HCT116 (cell line): ENCODE measurements at regions of chr10 and their contacts with region 1.

Region 1: DNA sequence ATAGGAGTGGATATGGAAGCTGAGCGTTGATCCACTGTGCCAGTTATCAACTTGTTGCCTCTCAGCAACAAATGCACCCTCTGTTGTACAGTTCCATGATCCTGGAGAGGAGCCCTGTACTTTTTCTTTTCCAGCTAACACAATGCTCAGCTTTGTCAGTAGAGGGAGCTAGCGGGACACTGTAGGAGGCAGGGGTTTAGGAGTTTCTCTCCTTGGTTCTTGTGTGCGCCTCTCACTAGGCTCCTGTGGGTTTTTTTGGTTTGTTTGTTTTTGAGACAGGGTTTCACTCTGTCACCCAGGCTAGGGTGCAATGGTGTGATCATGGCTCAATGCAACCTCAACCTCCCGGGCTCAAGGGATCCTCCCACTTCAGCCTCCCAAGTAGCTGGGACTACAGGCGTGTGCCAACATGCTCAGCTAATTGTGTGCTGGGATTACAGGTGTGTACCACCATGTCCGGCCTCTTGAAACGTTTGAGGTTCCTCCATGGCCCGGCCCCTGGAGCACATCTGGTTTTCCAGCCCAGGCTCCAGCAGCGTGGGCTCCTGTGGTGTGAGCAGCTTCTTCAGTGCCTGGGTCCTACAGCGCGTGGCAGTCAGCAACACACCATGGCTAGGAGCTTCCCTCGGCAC is 12.0 kb upstream of the MARVELD1 start:
- DNase-seq: no peak
- ATAC-seq: peak; percentile 98
- H3K4me3 ChIP-seq: no peak overlapping the region
- H3K27ac ChIP-seq: no peak overlapping the region; the same call in 1 of the 2 replicates
- H3K4me1 ChIP-seq: peaks cover 0 to 12% of the 10 kb centered on the region in 2 experiments; a peak in 2 of 4 replicates
- H3K27me3 ChIP-seq: no peaks in the 10 kb centered on the region
- CTCF ChIP-seq: peak; percentile 93 to 95 (median 93)
- POLR2A ChIP-seq: no peak
- RAD21 ChIP-seq: peak; percentile 92

Region 2: GRCh38 chr10:97676770-97677581 is 24.6 kb before region 1 on chr10:
- CTCF ChIA-PET with region 1: interaction called, 11 read pairs
- POLR2A ChIA-PET with region 1: no interaction called
- RAD21 ChIA-PET with region 1: no interaction called
- intact Hi-C with region 1: loop called (anchors 2 kb)
- DNase-seq: no peak
- ATAC-seq: peak; percentile 86
- H3K4me3 ChIP-seq: no peak overlapping the region
- H3K27ac ChIP-seq: 0 out of 2 replicates have a peak overlapping the region, but pooled peaks have one; percentile 20
- H3K4me1 ChIP-seq: peaks cover 0 to 15% of the 10 kb centered on the region in 2 experiments; a peak in 3 of 4 replicates
- H3K27me3 ChIP-seq: no peaks in the 10 kb centered on the region
- CTCF ChIP-seq: peak; percentile 71 to 88 (median 85)
- POLR2A ChIP-seq: no peak
- RAD21 ChIP-seq: peak; percentile 87

Region 3: DNA sequence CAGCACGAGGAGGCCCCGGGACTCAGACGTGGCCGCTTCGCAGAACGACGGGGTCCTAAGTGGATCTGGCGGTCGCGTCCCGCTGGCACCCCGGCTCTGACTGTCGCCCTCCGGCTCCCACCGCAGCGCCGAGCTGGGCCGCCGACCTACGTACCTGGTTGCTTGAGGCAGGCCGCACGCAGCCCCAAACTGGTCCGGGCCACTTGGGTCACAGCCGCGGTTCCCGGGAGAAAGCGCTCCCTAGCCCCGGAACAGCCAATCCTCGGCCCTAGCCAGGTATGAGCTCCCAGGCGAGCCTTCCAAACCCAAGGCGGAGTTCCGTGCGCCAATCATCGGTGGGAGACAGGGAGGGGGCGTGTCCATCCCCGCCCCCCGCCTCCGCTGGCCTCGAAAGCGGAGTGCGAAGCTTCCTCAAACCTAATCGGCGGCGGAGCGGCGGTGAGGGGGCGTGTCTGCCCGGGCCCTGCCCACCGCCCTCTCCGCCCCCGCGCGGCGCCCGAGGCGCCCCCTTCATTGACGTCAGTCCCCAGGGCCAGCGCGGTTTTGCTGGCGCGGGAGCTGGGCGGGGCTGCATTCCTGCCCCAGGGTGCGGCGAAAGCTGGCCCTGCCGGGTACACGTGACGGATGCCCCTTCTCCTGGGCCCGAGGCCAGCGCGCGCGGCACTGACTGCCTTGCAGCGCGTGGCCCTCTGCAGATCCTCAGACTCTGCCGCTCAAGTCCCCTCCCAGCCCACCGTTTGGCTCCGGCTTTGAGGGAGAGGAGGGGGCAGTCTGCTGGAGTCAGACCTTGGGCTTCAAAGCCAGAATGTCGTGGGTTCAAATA is 14.4 kb before region 1 on chr10 and contains the start of gene AVPI1:
- CTCF ChIA-PET with region 1: interaction called, 27 read pairs
- POLR2A ChIA-PET with region 1: interaction called, 15 read pairs
- RAD21 ChIA-PET with region 1: interaction called in 1 of 2 experiments, 4 read pairs
- intact Hi-C with region 1: no loop called
- DNase-seq: peak; percentile 96
- ATAC-seq: peak; percentile 87
- H3K4me3 ChIP-seq: peak within 1 kb of the TSS; percentile 73 to 90
- H3K27ac ChIP-seq: peak within 1 kb of the TSS; percentile 74
- H3K4me1 ChIP-seq: peaks cover 47 to 67% of the 10 kb centered on the region in 2 experiments
- H3K27me3 ChIP-seq: no peaks in the 10 kb centered on the region
- CTCF ChIP-seq: no peak
- POLR2A ChIP-seq: peak; percentile 56
- RAD21 ChIP-seq: no peak
- total RNA-seq, gene AVPI1: 26.7 TPM

Region 4: GRCh38 chr10:97714048-97714371 is 12.5 kb after region 1 on chr10:
- CTCF ChIA-PET with region 1: interaction called, 18 read pairs
- POLR2A ChIA-PET with region 1: interaction called, 4 read pairs
- RAD21 ChIA-PET with region 1: interaction called in 1 of 2 experiments, 3 read pairs
- intact Hi-C with region 1: no loop called
- DNase-seq: no peak
- ATAC-seq: peak; percentile 52
- H3K4me3 ChIP-seq: peak overlapping the region; percentile 72 to 81
- H3K27ac ChIP-seq: peak overlapping the region; percentile 99
- H3K4me1 ChIP-seq: peaks cover 33 to 52% of the 10 kb centered on the region in 2 experiments
- H3K27me3 ChIP-seq: no peaks in the 10 kb centered on the region
- CTCF ChIP-seq: no peak
- POLR2A ChIP-seq: peak; percentile 22
- RAD21 ChIP-seq: no peak

Region 5: DNA sequence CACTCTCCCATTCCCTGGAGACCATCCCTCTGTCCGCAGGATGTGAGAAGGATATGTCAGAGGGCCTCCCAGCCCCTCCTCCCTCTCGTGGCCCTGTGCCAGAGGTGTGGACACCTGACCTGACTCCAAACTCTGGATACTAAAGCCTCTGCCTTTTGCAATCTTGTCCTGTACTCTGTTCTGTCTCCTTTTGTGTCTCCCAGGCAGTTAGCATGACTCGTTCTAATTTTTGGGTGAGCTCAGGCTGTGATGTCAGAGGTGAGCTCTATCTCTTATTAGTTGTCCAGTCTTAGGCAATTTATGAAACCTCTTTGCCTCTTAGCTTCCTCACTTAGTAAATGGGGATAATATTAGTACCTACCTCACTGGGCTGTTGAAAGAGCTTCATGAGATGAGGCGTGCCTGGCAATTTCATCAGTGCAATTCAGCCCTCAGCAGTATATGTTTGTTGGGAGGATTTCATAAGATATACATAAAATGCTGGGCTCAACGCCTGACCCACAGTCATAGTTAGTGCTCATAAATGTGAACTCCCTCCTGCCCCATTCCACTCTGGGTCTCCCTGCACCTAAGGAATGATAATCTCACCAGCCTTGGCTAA is 22.9 kb after region 1 on chr10:
- CTCF ChIA-PET with region 1: interaction called, 13 read pairs
- POLR2A ChIA-PET with region 1: no interaction called
- RAD21 ChIA-PET with region 1: no interaction called
- intact Hi-C with region 1: no loop called
- DNase-seq: no peak
- ATAC-seq: 0 out of 2 replicates have a peak, but pooled peaks have one; percentile 17
- H3K4me3 ChIP-seq: no peak overlapping the region
- H3K27ac ChIP-seq: no peak overlapping the region
- H3K4me1 ChIP-seq: peaks cover 7 to 16% of the 10 kb centered on the region in 2 experiments
- H3K27me3 ChIP-seq: no peaks in the 10 kb centered on the region
- CTCF ChIP-seq: no peak
- POLR2A ChIP-seq: no peak
- RAD21 ChIP-seq: no peak

Region 6: DNA sequence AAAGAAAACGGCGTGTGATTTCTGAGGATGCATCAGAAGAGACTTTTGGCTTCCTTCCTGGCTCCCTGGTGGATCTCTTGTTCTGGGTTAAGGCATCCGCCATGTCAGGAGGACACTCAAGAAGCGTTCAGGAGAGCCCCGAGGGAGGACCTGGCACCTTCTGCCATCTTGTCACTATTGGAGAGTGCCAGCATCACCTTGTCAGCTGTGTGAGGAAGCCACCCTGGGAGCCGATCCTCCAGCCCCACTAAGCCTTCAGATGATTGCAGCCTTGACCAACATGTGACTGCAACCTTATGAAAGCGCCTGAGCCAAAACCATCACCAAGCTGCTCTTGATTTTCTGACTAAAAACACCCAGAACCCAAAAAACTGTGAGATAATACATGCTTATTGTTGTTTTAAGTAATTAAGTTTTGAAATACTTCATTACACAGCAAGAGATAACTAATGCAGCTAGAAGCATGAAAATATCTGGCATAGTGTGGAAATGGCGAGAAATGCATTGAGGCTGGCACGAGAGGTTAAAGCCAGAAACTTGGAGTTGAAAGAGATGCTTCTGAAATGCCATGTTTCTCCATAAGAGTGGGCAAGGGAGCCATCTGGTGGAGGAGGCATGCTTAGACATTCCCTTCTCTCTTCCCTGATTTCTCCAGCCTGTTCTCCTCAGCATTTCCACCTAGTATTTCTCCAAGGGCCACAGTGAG is 29.9 kb after region 1 on chr10:
- CTCF ChIA-PET with region 1: interaction called, 8 read pairs
- POLR2A ChIA-PET with region 1: interaction called, 3 read pairs
- RAD21 ChIA-PET with region 1: interaction called, 3 to 4 read pairs
- intact Hi-C with region 1: loop called (anchors 2 kb)
- DNase-seq: no peak
- ATAC-seq: peak; percentile 87
- H3K4me3 ChIP-seq: no peak overlapping the region
- H3K27ac ChIP-seq: no peak overlapping the region
- H3K4me1 ChIP-seq: peaks cover 0 to 8% of the 10 kb centered on the region in 2 experiments; a peak in 2 of 4 replicates
- H3K27me3 ChIP-seq: no peaks in the 10 kb centered on the region
- CTCF ChIP-seq: peak; percentile 85 to 95 (median 86)
- POLR2A ChIP-seq: no peak
- RAD21 ChIP-seq: peak; percentile 98

Region 7: GRCh38 chr10:98361131-98362025 is 659.8 kb after region 1 on chr10:
- CTCF ChIA-PET with region 1: no interaction called
- POLR2A ChIA-PET with region 1: no interaction called
- RAD21 ChIA-PET with region 1: no interaction called
- intact Hi-C with region 1: no loop called
- DNase-seq: no peak
- ATAC-seq: peak; percentile 70
- H3K4me3 ChIP-seq: no peak overlapping the region
- H3K27ac ChIP-seq: no peak overlapping the region
- H3K4me1 ChIP-seq: peaks cover 0 to 3% of the 10 kb centered on the region in 2 experiments; a peak in 1 of 4 replicates
- H3K27me3 ChIP-seq: no peaks in the 10 kb centered on the region
- CTCF ChIP-seq: no peak
- POLR2A ChIP-seq: no peak
- RAD21 ChIP-seq: no peak

Region 8: DNA sequence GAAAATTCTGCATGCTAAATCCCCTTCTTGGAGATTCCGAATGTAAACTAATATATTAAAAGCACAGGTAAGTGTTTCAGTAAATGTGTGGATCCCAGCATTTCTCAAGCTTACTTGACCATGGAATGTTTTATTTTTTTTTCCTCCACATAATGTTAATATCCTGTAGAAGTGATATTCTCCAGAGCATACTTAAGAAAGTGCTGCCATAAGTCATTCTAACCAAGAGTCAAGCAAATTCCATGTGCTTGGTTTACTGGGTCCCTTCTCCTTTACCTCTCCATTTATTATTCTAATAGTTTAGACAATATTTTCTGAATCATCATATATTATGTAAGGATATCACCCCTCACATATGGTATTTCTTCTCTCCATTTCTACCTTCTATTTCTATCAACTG is 1012.0 kb after region 1 on chr10:
- CTCF ChIA-PET with region 1: no interaction called
- POLR2A ChIA-PET with region 1: no interaction called
- RAD21 ChIA-PET with region 1: no interaction called
- intact Hi-C with region 1: no loop called
- DNase-seq: no peak
- ATAC-seq: no peak
- H3K4me3 ChIP-seq: no peak overlapping the region
- H3K27ac ChIP-seq: no peak overlapping the region
- H3K4me1 ChIP-seq: no peaks in the 10 kb centered on the region
- H3K27me3 ChIP-seq: peaks cover 22% of the 10 kb centered on the region
- CTCF ChIP-seq: no peak
- POLR2A ChIP-seq: no peak
- RAD21 ChIP-seq: no peak